ENCODE measurements at regions of chr11 and their contacts with region 1.

Region 1: DNA sequence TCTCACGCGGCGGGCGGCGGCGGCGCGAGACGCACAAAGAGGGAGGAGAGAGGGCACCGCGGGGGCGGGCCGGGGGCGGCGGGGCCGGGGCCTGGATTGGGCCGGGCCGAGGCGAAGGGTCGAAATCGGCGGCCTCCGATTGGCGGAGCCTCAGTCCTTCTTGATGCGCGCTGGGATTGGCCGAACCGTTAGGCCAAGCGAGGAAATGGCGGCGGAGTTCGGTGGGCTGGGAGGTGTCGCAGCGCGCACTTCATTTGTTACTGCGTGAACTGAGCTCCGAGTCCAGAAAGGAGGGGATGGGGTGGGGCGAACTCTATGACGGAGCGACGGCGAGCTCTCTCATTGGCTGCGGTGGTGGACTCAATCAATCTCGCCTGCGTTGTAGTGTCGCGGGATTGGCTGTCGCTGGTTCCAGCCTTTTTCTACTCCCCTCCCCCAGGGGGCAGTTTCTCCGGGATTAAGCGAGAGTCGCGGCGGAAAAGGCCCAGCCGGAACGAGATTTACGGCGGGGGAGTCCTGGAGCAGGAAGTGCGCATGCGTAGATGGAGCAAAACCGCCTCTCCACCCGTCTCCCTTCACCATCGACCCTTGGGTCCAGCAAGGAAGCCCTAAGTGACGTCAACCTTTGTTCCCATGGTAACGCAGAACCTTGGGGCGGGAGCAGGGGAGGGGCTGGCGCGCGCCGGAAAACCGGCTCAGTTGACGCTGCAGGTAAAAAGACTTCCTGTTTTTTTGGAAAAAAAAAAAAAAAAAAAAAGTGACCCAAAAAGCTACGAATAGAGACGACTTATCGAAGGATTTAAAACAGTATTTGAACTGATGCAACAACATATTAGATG is at the start of gene SF1:
- DNase-seq: peak; percentile 100
- H3K4me3 ChIP-seq: peak within 1 kb of the TSS; percentile 87 to 99
- H3K27ac ChIP-seq: peak within 1 kb of the TSS; percentile 99
- H3K4me1 ChIP-seq: peaks cover 44% of the 10 kb centered on the region
- H3K27me3 ChIP-seq: no peaks in the 10 kb centered on the region
- CTCF ChIP-seq: peak in 1 of 3 experiments; percentile 19
- POLR2A ChIP-seq: peak; percentile 72 to 90
- total RNA-seq, gene SF1: 278 TPM

Region 2: GRCh38 chr11:64649291-64649697 is 129.4 kb before region 1 on chr11:
- intact Hi-C with region 1: no loop called
- DNase-seq: no peak
- H3K4me3 ChIP-seq: no peak overlapping the region
- H3K27ac ChIP-seq: no peak overlapping the region
- H3K4me1 ChIP-seq: peaks cover 10% of the 10 kb centered on the region
- H3K27me3 ChIP-seq: no peaks in the 10 kb centered on the region
- CTCF ChIP-seq: peak in 1 of 3 experiments; percentile 14
- POLR2A ChIP-seq: no peak

Region 3: GRCh38 chr11:64742889-64743590 is 35.7 kb before region 1 on chr11:
- intact Hi-C with region 1: loop called (anchors 5 kb)
- DNase-seq: no peak
- H3K4me3 ChIP-seq: peak overlapping the region; percentile 59 to 61
- H3K27ac ChIP-seq: peak overlapping the region; percentile 87
- H3K4me1 ChIP-seq: peaks cover 45% of the 10 kb centered on the region
- H3K27me3 ChIP-seq: peaks cover 7% of the 10 kb centered on the region
- CTCF ChIP-seq: peak in 2 of 3 experiments; percentile 68 to 71
- POLR2A ChIP-seq: no peak

Measured in vagina (tissue), 2 donors.